Activated CD4-positive, alpha-beta T cell treated with anti-CD3 and anti-CD28 coated beads for 36 hours (primary cell): ENCODE measurements at regions of chr3 and their contacts with region 1.

Region 1: DNA sequence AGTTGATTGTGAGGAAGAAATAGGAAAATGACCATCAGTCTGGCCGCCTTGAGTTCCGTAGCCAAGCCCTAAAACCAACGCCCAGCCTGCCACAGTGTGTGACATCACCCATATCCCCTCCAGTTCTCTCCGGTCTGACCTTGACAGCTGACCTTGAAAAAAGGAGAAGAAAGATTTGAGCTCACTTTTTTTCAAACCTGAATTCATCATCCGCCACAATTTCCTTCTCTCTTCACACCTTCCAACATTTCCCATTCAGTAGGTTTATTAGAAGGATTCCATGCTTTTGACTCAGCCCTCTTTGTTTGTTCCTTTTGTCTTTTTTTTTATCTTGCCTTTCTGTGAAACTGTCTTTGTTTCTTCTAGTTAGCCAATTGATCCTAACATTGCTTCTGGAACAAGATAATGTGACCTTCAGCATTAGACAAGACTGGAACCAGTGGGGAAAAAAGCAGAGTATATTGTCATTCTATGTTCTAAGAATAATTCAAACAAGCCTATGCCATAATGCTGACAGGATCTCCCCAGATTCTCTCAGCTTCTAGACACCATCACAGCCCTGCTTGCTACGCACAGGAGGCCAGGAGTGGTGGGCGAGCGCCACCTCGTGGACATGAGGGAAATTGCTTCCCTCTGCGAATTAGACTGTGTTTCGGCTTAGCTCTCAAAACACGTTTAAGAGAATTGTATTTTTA is 283.1 kb downstream of the FGF12 start:
- DNase-seq: peak; percentile 76
- ATAC-seq: peak; percentile 68
- H3K4me3 Mint-ChIP-seq: no peak overlapping the region
- H3K27ac Mint-ChIP-seq: no peak overlapping the region
- H3K4me1 Mint-ChIP-seq: no peaks in the 10 kb centered on the region
- H3K27me3 Mint-ChIP-seq: peaks cover 26% of the 10 kb centered on the region

Region 2: GRCh38 chr3:190883973-190884832 is 1560.0 kb before region 1 on chr3:
- CTCF ChIA-PET with region 1: no interaction called
- POLR2A ChIA-PET with region 1: no interaction called
- intact Hi-C with region 1: loop called in 1 of 2 experiments (anchors 5 kb)
- DNase-seq: peak; percentile 56
- ATAC-seq: no peak
- H3K4me3 Mint-ChIP-seq: no peak overlapping the region
- H3K27ac Mint-ChIP-seq: no peak overlapping the region
- H3K4me1 Mint-ChIP-seq: no peaks in the 10 kb centered on the region
- H3K27me3 Mint-ChIP-seq: peaks cover 13% of the 10 kb centered on the region

Region 3: GRCh38 chr3:191414286-191414685 is 1030.0 kb before region 1 on chr3:
- CTCF ChIA-PET with region 1: interaction called, 7 read pairs
- POLR2A ChIA-PET with region 1: no interaction called
- intact Hi-C with region 1: loop called (anchors 1 to 2 kb)
- DNase-seq: no peak
- ATAC-seq: no peak
- H3K4me3 Mint-ChIP-seq: no peak overlapping the region
- H3K27ac Mint-ChIP-seq: no peak overlapping the region
- H3K4me1 Mint-ChIP-seq: no peaks in the 10 kb centered on the region
- H3K27me3 Mint-ChIP-seq: peaks cover 6% of the 10 kb centered on the region

Region 4: DNA sequence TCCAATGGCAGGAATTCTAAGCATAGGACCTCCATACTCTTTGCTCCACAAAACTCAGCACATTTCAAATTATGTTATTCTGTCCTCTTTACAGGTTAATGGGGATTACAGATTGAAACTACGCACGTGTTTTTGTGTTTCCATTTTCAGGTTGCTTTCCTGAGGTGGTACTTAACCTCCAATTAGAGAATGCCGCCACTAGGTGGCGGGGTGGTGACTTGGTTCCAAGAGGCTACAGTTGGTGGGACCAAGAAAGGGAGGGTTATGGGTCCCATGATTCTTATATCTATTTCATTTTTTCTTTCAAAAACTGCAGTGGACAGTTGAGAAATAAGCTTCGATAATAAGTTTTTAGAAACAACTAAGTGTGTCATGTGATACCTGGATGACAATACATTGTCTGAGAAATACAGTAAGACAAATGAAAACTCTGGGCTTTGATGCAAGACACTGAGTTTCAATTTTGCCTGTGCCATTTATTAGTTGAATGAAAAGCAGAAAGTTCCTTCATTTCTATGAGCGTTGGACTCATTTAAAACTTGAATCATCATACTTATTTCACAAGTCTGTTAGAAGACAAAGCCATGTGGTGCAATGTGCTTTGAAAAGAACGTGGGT is 255.9 kb before region 1 on chr3:
- CTCF ChIA-PET with region 1: interaction called, 24 read pairs
- POLR2A ChIA-PET with region 1: no interaction called
- intact Hi-C with region 1: loop called (anchors 1 kb)
- DNase-seq: peak; percentile 72
- ATAC-seq: peak; percentile 36
- H3K4me3 Mint-ChIP-seq: no peak overlapping the region
- H3K27ac Mint-ChIP-seq: no peak overlapping the region
- H3K4me1 Mint-ChIP-seq: peaks cover 3% of the 10 kb centered on the region
- H3K27me3 Mint-ChIP-seq: no peaks in the 10 kb centered on the region

Region 5: GRCh38 chr3:192339214-192339613 is 105.0 kb before region 1 on chr3:
- CTCF ChIA-PET with region 1: no interaction called
- POLR2A ChIA-PET with region 1: no interaction called
- intact Hi-C with region 1: no loop called
- DNase-seq: no peak
- ATAC-seq: no peak
- H3K4me3 Mint-ChIP-seq: no peak overlapping the region
- H3K27ac Mint-ChIP-seq: no peak overlapping the region
- H3K4me1 Mint-ChIP-seq: no peaks in the 10 kb centered on the region
- H3K27me3 Mint-ChIP-seq: peaks cover 2% of the 10 kb centered on the region

Region 6: DNA sequence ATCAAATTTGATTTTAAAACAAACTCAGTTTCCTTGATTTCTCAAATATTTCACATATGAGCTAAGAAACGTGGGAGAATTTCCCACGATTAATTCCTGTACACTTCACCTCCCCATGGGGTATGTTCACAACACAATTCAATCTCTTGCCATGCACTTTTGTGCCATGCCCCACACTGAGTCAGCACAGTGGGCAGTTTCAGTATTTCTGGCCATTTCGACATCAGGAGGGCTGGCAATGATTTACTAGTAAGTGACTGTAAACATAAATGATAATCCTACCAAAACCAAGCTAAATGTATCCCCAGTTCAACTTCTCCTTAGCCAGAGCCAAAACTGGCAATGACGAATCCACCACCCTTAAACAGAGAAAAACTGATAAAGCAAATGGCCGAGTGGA is 10.5 kb before region 1 on chr3:
- CTCF ChIA-PET with region 1: interaction called, 17 read pairs
- POLR2A ChIA-PET with region 1: no interaction called
- intact Hi-C with region 1: no loop called
- DNase-seq: no peak
- ATAC-seq: no peak
- H3K4me3 Mint-ChIP-seq: no peak overlapping the region
- H3K27ac Mint-ChIP-seq: no peak overlapping the region
- H3K4me1 Mint-ChIP-seq: no peaks in the 10 kb centered on the region
- H3K27me3 Mint-ChIP-seq: peaks cover 10% of the 10 kb centered on the region

Region 7: DNA sequence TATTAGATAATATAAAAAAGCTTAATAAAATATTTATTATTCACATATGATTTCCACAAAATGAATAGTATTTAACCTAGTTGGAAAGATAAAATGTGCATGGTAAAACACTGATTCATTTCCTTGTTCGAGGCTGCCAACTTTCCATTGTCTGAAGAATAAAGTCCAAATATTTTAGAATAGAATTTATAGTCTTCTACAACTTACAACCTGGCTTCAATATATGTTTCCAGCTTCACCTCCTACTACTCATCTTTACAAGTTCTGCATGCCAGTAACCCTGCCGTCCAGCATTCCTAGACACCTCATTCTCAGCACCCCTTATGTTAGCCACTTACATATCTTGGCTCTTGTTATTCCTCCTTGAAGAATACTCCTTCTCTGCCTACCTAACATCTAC is 38.6 kb after region 1 on chr3:
- CTCF ChIA-PET with region 1: no interaction called
- POLR2A ChIA-PET with region 1: no interaction called
- intact Hi-C with region 1: no loop called
- DNase-seq: no peak
- ATAC-seq: no peak
- H3K4me3 Mint-ChIP-seq: no peak overlapping the region
- H3K27ac Mint-ChIP-seq: no peak overlapping the region
- H3K4me1 Mint-ChIP-seq: no peaks in the 10 kb centered on the region
- H3K27me3 Mint-ChIP-seq: peaks cover 3% of the 10 kb centered on the region